IMR-90 (cell line): ENCODE measurements at regions of chr11 and their contacts with region 1.

Region 1: DNA sequence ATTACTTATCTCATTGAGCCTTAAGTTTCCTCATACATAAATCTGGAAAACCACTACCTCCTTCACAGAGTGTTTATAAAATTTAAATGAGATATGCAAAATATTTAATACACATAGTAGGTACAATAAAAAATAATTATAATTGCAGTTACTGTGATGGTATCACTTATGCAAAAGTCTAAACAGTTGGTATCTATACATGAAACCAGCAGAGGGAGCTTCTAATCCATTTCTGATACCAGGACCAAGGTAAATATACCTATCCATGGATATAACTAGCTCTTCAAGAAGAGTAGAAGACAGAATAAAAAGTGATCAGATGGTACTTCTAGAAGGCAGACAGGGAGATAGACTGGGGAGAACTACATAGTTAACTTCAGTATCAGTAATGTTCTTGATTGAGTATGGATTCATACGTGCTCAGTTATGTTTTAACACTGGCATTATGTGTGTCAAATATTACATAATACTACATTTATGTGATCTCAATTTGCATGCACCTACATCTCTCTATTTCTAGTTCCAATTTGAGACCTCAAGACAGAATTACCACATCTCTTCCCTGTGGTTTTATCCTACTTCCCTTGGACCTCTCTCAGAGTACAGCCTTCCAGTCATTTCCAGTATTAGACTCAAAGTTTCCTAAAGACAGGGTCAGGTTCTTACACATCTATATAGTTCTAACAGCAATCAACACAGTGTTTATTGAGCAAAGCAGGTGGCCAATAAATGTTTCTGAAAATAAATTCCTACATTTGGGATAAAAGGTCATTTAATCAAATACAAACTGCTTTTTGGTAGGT is 13.7 kb upstream of the TSG101 start:
- DNase-seq: peak; percentile 25
- ATAC-seq: peak; percentile 62; the same call in 1 of the 2 replicates
- H3K4me3 ChIP-seq: no peak overlapping the region
- H3K27ac ChIP-seq: no peak overlapping the region
- H3K4me1 ChIP-seq: no peaks in the 10 kb centered on the region
- H3K27me3 ChIP-seq: no peaks in the 10 kb centered on the region
- CTCF ChIP-seq: peak; percentile 46
- POLR2A ChIP-seq: no peak
- RAD21 ChIP-seq: peak; percentile 46

Region 2: DNA sequence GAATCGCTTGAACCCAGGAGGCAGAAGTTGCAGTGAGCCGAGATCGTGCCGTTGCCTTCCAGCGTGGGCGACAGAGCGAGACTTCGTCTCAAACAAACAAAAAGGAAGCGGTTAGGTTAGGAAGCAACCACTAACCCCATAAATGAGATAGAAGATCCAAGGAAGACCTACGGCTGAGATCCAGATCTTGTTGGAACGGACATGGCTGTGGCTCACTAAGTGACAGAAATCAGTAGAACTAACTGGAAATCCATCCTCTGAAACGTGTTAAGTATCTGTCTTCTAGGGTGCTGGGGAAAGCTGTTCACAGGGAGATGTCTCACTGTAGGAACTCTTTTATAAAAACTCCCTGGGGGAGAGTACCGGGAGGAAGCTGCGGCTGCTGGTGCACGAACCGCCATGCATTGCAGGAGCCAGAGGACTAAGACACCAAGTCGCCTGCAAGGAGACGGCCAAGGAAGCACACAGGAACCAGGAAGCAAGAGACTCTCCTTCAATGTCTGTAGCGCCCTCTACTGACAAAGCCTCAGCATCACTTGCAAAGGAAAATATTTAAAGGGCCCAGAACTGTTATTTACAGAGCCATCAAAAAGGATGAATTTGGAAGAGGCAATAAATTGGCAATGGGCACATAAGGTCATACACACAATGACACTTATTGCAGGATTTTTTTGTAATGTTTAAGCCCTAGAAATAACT is 110.6 kb after region 1 on chr11:
- CTCF ChIA-PET with region 1: no interaction called
- POLR2A ChIA-PET with region 1: no interaction called
- dilution Hi-C with region 1: no loop called
- in situ Hi-C with region 1: no loop called
- intact Hi-C with region 1: loop called (anchors 1 kb)
- DNase-seq: peak; percentile 69
- ATAC-seq: peak; percentile 83
- H3K4me3 ChIP-seq: no peak overlapping the region
- H3K27ac ChIP-seq: no peak overlapping the region
- H3K4me1 ChIP-seq: no peaks in the 10 kb centered on the region
- H3K27me3 ChIP-seq: no peaks in the 10 kb centered on the region
- CTCF ChIP-seq: peak; percentile 69
- POLR2A ChIP-seq: no peak
- RAD21 ChIP-seq: peak; percentile 75

Region 3: DNA sequence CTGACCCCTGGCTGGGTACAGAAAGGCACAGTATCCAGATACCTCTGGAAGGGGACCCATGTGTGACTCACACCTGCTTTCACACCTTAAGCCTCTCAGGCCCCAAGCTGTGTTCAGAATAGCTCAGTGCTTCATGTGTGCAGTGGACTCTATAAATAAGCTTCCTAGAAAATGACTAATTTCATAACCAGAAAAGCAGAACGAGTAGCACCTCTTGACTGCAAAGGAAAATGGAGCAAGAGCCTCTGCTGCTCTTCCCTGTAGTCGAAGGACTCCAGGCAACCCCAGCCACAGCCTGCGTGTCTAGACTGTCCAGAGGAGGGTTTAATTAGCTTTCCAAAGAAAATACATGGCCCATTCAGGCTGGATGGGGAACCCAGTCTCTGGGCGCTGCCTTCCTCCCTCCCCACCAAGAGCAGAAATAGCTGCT is 228.1 kb after region 1 on chr11:
- CTCF ChIA-PET with region 1: interaction called, 5 read pairs
- POLR2A ChIA-PET with region 1: no interaction called
- dilution Hi-C with region 1: no loop called
- in situ Hi-C with region 1: no loop called
- intact Hi-C with region 1: loop called (anchors 10 kb)
- DNase-seq: no peak
- ATAC-seq: no peak
- H3K4me3 ChIP-seq: no peak overlapping the region
- H3K27ac ChIP-seq: no peak overlapping the region
- H3K4me1 ChIP-seq: no peaks in the 10 kb centered on the region; the same call in 1 of the 2 replicates
- H3K27me3 ChIP-seq: peaks cover 28% of the 10 kb centered on the region
- CTCF ChIP-seq: no peak
- POLR2A ChIP-seq: no peak
- RAD21 ChIP-seq: no peak